Posterior cingulate gyrus (tissue), 11 donors: ENCODE measurements at regions of chr1 and their contacts with region 1.

Region 1: GRCh38 chr1:78607334-78607927 is 12.8 kb upstream of the IFI44L start:
- DNase-seq: no peak

Region 2: GRCh38 chr1:78132174-78132947 is 475.1 kb before region 1 on chr1:
- intact Hi-C with region 1: loop called (anchors 5 kb)
- DNase-seq: no peak

Region 3: DNA sequence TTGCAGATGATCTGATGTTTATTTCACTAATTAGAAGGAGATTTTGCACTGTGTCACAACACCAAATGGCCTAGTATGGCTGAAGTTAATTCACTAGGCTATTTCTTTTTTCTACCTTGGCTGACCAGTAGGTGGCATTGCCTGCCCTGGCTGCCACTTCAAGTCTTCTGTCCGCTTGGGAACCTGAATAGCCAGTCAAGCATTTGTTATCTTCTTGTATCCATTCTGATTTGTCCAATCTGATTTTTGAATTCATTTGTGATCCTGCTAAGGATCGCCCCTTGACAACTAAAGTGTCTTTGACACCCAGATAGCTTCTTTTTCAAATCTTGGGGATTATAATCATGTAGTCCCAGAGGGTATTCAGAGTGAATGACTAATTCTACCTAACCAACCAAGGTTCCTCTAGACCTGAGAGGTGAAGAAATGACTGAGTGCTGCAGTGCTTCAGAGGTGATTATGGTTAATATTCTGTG is 462.3 kb before region 1 on chr1:
- intact Hi-C with region 1: loop called (anchors 1 kb)
- DNase-seq: peak in 9 of 10 donors; percentile 23 to 93 (median 48)